ENCODE measurements at regions of chr19 and their contacts with region 1.

Region 1: GRCh38 chr19:13588957-13589833 is 82.9 kb upstream of the CACNA1A start:
- DNase-seq: peak; percentile 49
- ATAC-seq: peak; percentile 100
- H3K4me3 ChIP-seq: peak overlapping the region; percentile 26 to 41
- H3K27ac ChIP-seq: no peak overlapping the region
- H3K4me1 ChIP-seq: peaks cover 0 to 10% of the 10 kb centered on the region in 2 experiments; a peak in 2 of 4 replicates
- H3K27me3 ChIP-seq: no peaks in the 10 kb centered on the region
- CTCF ChIP-seq: peak; percentile 93 to 98 (median 98)
- POLR2A ChIP-seq: no peak
- RAD21 ChIP-seq: peak; percentile 89

Region 2: GRCh38 chr19:13334801-13335481 is 254.3 kb before region 1 on chr19:
- CTCF ChIA-PET with region 1: interaction called, 7 read pairs
- POLR2A ChIA-PET with region 1: no interaction called
- RAD21 ChIA-PET with region 1: interaction called, 3 to 5 read pairs
- intact Hi-C with region 1: loop called (anchors 1 kb)
- DNase-seq: peak; percentile 90
- ATAC-seq: peak; percentile 91
- H3K4me3 ChIP-seq: peak overlapping the region; percentile 70 to 84
- H3K27ac ChIP-seq: peak overlapping the region; percentile 64
- H3K4me1 ChIP-seq: peaks cover 2 to 15% of the 10 kb centered on the region in 2 experiments; a peak in 2 of 4 replicates
- H3K27me3 ChIP-seq: no peaks in the 10 kb centered on the region
- CTCF ChIP-seq: peak; percentile 67 to 85 (median 78)
- POLR2A ChIP-seq: peak; percentile 40
- RAD21 ChIP-seq: peak; percentile 82

Region 3: DNA sequence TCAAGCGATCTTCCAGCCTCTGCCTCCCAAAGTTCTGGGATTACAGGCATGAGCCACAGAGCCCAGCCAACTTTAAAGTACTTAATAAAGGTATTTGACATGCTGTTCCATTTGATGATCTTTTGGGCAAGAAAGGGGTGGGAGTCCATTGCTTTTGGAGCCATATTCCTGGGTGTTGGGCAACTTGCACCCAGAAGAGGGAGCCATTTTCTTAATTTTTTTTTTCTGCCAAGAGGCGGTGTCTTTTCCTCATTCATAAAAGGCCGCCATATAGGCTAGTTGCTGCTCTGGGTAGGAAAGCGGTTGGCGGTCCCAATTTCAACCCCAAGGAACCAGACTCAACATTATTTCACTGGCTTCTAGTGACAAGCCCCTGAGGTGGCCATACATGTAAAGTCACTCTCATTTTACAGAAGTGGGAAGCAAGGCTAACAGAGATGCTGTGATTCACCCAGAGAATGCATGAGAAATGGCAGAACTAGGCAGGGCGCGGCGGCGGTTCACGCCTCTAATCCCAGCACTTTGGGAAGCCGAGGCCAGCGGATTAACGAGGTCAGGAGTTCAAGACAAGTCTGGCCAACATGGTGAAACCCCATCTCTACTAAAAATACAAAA is 222.6 kb before region 1 on chr19:
- CTCF ChIA-PET with region 1: interaction called, 3 read pairs
- POLR2A ChIA-PET with region 1: no interaction called
- RAD21 ChIA-PET with region 1: no interaction called
- intact Hi-C with region 1: loop called (anchors 1 kb)
- DNase-seq: peak; percentile 51
- ATAC-seq: peak; percentile 87
- H3K4me3 ChIP-seq: no peak overlapping the region
- H3K27ac ChIP-seq: no peak overlapping the region
- H3K4me1 ChIP-seq: peaks cover 0 to 6% of the 10 kb centered on the region in 2 experiments; a peak in 1 of 4 replicates
- H3K27me3 ChIP-seq: no peaks in the 10 kb centered on the region
- CTCF ChIP-seq: peak; percentile 64 to 93 (median 75)
- POLR2A ChIP-seq: no peak
- RAD21 ChIP-seq: peak; percentile 95

Region 4: GRCh38 chr19:13459351-13459750 is 129.8 kb before region 1 on chr19:
- CTCF ChIA-PET with region 1: no interaction called
- POLR2A ChIA-PET with region 1: no interaction called
- RAD21 ChIA-PET with region 1: no interaction called
- intact Hi-C with region 1: no loop called
- DNase-seq: no peak
- ATAC-seq: no peak
- H3K4me3 ChIP-seq: no peak overlapping the region
- H3K27ac ChIP-seq: no peak overlapping the region
- H3K4me1 ChIP-seq: no peaks in the 10 kb centered on the region
- H3K27me3 ChIP-seq: peaks cover 44% of the 10 kb centered on the region
- CTCF ChIP-seq: no peak
- POLR2A ChIP-seq: no peak
- RAD21 ChIP-seq: no peak

Region 5: DNA sequence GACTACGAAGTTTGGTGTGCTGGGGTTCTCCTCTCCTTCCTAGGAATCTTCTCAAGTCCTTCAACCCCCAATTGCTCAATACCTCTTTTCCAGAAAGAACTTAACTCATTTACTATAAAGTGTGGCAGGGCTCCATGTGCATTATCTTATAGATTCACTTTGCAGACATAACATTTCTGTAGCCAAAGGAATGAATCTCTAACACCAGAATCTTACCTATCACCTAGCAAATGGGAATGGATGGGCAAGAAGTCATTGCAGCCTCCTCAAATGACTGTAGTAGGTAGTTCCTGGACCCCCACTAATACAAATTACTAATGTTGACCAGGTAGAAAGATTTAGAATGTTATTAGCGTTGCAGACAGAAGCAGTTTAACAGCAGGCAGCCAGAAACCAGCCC is 77.2 kb before region 1 on chr19:
- CTCF ChIA-PET with region 1: no interaction called
- POLR2A ChIA-PET with region 1: no interaction called
- RAD21 ChIA-PET with region 1: no interaction called
- intact Hi-C with region 1: no loop called
- DNase-seq: no peak
- ATAC-seq: no peak
- H3K4me3 ChIP-seq: no peak overlapping the region
- H3K27ac ChIP-seq: no peak overlapping the region
- H3K4me1 ChIP-seq: no peaks in the 10 kb centered on the region
- H3K27me3 ChIP-seq: peaks cover 68% of the 10 kb centered on the region
- CTCF ChIP-seq: no peak
- POLR2A ChIP-seq: no peak
- RAD21 ChIP-seq: no peak